Prostate gland (tissue), 2 donors: ENCODE measurements at regions of chr1 and their contacts with region 1.

Region 1: DNA sequence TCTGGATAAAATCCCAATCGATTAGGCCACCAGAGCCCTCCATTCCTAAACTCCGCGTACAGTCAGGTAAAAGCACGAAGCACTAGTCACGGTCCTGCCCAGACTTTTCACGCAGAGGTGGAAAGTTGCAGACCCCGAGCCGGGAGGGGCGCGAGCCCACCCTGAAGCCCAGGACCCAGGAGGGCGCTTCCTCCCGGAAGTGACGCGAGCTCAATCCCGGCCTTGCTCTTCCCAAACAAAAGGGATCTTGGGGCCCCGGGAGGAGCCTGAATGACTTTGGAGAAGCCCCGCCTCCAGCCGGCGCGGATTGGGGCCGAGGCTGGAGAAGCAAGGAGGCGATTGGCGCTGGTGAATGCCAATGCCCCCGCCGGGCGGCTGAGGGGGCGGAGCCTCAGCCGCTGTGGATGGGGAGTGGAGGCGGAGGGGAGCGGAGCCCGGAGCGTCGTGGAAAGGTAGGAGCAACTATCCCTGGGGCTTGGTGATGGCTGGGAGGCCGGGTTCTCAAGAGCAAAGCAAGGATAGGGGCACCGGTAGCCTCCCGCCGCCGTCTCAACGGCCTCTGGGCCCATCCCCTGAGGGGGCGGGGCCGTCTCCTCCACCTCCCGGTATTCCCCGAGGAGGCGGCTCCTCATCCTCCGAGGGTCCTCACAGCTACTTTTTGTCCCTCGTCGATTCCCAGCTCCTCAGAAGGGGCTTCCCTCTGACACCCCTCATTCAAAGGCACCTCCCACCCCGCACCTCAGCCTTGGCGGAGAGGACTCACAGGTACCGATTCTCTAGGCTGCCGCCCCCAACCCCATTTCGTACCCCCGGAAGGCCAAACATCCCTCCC is at the start of gene CTTNBP2NL:
- DNase-seq: peak; percentile 98
- H3K4me3 ChIP-seq: peak within 1 kb of the TSS; percentile 65 to 76
- H3K27ac ChIP-seq: peak within 1 kb of the TSS; percentile 85 to 87
- H3K4me1 ChIP-seq: peaks cover 8% of the 10 kb centered on the region
- H3K27me3 ChIP-seq: no peaks in the 10 kb centered on the region
- CTCF ChIP-seq: peak in 2 of 4 experiments; percentile 2 to 18
- POLR2A ChIP-seq: peak; percentile 75
- total RNA-seq, gene CTTNBP2NL: 10.6 to 15.2 TPM

Region 2: DNA sequence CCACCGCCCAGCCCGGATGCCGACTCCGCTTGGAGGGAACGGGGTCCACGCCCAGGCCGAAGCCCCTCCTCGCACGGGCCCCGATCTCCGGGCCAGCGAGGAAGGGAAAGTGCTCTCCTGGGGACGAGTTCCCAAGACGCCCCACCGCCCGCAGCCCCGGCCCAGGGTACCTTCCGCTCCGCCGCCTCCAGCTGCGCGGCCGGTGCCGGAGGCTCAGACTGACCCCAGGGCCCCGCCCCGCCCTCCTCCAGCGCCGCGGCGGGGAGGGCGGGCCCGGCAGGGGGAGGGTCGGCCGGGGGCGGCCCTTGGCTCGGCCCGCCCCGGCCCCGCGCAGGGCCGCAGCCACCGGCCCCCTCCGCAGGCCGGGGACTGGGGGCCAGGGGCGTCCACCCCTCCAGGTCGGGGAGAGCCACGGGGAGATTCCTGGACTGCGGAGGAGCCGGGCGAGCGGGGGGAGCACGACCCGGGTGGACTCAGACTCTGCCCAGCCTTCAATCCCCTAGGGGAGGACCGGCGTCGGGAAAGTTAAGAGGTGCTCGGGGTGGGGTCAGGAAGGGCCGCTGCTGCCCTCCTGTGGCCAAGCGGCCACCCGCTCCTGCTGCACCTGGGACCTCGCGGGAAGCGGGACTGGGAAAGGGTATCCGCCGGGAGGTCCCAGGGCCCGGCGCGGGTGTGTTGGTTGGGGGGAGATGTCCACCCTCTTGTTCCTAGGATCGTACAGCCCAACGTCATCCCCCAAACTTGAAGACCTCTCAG is 311.0 kb after region 1 on chr1 and contains the start of gene RHOC:
- intact Hi-C with region 1: loop called (anchors 2 kb)
- DNase-seq: peak; percentile 90
- H3K4me3 ChIP-seq: peak within 1 kb of the TSS; percentile 96 to 99
- H3K27ac ChIP-seq: peak within 1 kb of the TSS; percentile 98
- H3K4me1 ChIP-seq: peaks cover 21% of the 10 kb centered on the region
- H3K27me3 ChIP-seq: no peaks in the 10 kb centered on the region
- CTCF ChIP-seq: peak; percentile 89 to 95 (median 92)
- POLR2A ChIP-seq: peak; percentile 91
- total RNA-seq, gene RHOC: 272 to 373 TPM

Region 3: DNA sequence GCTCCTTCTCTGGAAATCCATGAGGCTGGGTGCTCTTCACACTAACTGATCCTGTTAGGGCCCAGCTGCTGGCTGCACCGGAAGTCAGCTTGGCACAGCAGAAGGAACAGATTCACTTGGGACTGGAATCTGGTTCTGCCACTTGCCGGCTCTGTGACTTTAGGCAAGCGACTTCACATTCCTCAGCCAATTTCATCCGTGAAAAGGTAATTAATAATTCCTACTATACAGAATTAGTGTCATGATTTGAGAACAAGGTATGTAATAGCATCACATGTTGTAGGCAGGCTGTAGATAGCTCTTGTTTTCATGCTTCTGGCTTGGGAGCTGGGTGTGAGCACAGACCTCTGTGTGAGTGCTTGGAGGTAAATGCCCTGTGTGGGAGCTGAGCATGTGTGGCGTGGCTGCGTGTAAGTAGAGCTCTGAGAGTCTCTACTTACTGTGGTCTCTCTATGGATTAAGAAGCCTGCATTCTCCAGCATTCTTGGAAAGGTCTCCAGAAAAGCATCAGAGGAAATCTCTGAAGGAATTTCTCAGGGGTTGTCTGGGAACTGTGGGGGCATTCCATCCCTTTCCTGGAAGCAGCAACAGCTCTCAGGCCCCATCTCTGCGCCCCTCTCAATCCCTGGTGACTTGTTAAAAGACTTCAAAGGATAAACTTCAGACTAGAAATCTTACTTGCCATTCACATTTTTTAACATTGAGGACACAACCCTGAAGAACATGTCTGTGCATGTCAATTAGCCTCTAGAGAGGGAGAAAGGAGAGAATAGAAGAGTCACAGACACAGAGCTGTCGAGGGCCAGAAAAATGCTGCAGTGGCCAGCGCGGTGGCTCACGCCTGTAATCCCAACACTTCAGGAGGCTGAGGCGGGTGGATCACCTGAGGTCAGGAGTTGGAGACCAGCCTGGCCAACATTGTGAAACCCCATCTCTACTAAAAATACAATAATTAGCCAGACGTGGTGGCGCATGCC is 366.8 kb after region 1 on chr1:
- intact Hi-C with region 1: no loop called
- DNase-seq: peak; percentile 65
- H3K4me3 ChIP-seq: no peak overlapping the region
- H3K27ac ChIP-seq: peak overlapping the region in 1 of 2 donors; percentile 48
- H3K4me1 ChIP-seq: no peaks in the 10 kb centered on the region
- H3K27me3 ChIP-seq: no peaks in the 10 kb centered on the region
- CTCF ChIP-seq: no peak
- POLR2A ChIP-seq: no peak